ENCODE measurements at regions of chr1 and their contacts with region 1.

Region 1: DNA sequence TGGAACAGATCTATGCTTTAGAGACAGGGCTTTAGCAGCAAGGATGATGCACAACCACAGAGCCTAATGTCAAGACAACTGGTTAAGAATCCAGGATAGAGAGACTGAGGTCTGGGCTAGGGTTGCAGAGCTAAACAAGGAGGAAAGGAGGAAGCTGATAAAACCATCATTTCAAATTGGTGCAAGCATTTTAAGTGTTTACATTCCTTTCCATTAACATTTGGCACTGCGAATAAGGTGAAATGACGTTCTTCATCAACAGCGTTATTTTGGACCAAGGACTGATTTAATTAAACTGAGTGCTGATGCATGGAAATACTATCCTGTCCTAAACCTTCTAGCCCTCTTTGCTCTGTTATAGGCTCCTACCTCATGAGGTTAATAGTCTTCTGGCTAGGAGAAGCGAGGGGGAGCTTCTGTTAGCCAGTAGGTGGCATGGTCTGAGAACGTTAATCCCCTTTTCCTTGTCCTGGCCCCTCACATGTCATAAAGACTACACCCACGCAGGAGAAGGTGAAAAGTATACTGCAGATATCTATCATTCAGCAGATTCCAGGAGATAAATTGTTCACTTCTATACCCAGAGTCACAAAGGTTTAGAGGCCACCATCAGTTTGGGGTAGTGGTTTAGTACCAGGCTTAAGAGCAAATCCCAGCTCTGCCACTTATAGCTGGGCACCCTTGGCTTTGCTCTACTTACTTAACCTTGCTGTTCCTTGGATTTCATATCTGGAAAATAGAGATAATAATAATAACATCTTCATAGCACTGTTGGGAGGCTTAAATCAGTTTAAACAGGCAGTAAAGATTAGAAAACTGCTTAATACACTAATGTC is 7.5 kb upstream of the C1orf21 start:
- DNase-seq: no peak
- H3K4me3 ChIP-seq: no peak overlapping the region
- H3K27ac ChIP-seq: no peak overlapping the region
- H3K4me1 ChIP-seq: no peaks in the 10 kb centered on the region
- H3K27me3 ChIP-seq: no peaks in the 10 kb centered on the region
- CTCF ChIP-seq: peak; percentile 13 to 17

Region 2: GRCh38 chr1:184465489-184466146 is 86.3 kb after region 1 on chr1:
- CTCF ChIA-PET with region 1: interaction called, 10 read pairs
- dilution Hi-C with region 1: no loop called
- in situ Hi-C with region 1: no loop called
- intact Hi-C with region 1: no loop called
- DNase-seq: no peak
- H3K4me3 ChIP-seq: no peak overlapping the region
- H3K27ac ChIP-seq: no peak overlapping the region
- H3K4me1 ChIP-seq: peaks cover 6% of the 10 kb centered on the region
- H3K27me3 ChIP-seq: no peaks in the 10 kb centered on the region
- CTCF ChIP-seq: no peak

Region 3: DNA sequence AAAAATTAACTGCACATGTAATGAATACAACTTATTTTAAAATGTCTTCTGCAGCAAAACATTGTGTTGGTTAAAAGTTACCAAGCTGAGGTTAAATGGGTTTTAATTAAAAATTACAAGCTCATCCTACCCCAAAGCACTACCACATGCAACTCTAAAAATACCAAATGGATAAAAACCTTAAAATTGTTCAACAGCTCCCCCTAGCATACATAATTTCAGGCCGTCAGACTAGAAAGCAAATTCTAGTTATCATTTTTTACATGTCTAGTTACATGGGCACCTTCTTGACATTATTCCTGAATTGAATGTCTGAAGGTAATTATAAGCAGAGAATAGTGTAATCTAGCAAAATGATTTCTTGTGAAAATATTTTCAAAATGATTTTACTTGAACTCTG is 184.0 kb after region 1 on chr1:
- CTCF ChIA-PET with region 1: no interaction called
- dilution Hi-C with region 1: no loop called
- in situ Hi-C with region 1: loop called in 1 of 2 experiments (anchors 10 kb)
- intact Hi-C with region 1: loop called (anchors 1 kb)
- DNase-seq: peak; percentile 16
- H3K4me3 ChIP-seq: no peak overlapping the region
- H3K27ac ChIP-seq: no peak overlapping the region
- H3K4me1 ChIP-seq: peaks cover 14% of the 10 kb centered on the region
- H3K27me3 ChIP-seq: no peaks in the 10 kb centered on the region
- CTCF ChIP-seq: peak; percentile 46 to 60

Measured in mammary epithelial cell (primary cell).